ENCODE measurements at regions of chr14 and their contacts with region 1.

Region 1: GRCh38 chr14:50489489-50490250 is 42.7 kb downstream of the MAP4K5 start:
- DNase-seq: no peak
- ATAC-seq: no peak
- H3K4me3 ChIP-seq: no peak overlapping the region
- H3K27ac ChIP-seq: no peak overlapping the region
- H3K4me1 ChIP-seq: peaks cover 0 to 9% (median 0%) of the 10 kb centered on the region in 12 donors
- H3K27me3 ChIP-seq: no peaks in the 10 kb centered on the region
- CTCF ChIP-seq: no peak
- POLR2A ChIP-seq: no peak

Region 2: DNA sequence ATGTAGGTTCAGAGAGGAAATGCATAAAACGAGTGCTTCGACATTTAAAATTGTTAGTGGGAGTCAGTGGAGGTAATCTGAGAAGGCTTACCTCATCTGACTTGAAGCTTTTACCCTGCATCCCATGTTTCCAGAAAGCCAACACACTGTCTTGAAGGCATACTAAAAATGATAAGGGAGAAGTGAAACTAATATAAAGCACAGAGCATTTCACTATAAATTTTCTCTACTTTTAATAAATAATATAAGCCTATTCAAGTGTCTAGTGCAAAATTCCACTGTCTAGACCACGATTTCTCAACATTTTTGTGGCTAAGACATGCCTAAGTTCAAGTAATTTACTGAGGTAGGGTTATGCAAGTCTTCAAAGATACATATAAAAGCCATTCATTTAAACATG is 63.9 kb before region 1 on chr14:
- intact Hi-C with region 1: loop called in 1 of 10 experiments (anchors 10 kb)
- DNase-seq: no peak
- ATAC-seq: no peak
- H3K4me3 ChIP-seq: no peak overlapping the region
- H3K27ac ChIP-seq: no peak overlapping the region
- H3K4me1 ChIP-seq: no peaks in the 10 kb centered on the region
- H3K27me3 ChIP-seq: no peaks in the 10 kb centered on the region
- CTCF ChIP-seq: no peak
- POLR2A ChIP-seq: no peak

Measured in heart left ventricle (tissue), 16 donors.